CD4-positive, alpha-beta T cell (primary cell): ENCODE measurements at regions of chr2 and their contacts with region 1.

Region 1: DNA sequence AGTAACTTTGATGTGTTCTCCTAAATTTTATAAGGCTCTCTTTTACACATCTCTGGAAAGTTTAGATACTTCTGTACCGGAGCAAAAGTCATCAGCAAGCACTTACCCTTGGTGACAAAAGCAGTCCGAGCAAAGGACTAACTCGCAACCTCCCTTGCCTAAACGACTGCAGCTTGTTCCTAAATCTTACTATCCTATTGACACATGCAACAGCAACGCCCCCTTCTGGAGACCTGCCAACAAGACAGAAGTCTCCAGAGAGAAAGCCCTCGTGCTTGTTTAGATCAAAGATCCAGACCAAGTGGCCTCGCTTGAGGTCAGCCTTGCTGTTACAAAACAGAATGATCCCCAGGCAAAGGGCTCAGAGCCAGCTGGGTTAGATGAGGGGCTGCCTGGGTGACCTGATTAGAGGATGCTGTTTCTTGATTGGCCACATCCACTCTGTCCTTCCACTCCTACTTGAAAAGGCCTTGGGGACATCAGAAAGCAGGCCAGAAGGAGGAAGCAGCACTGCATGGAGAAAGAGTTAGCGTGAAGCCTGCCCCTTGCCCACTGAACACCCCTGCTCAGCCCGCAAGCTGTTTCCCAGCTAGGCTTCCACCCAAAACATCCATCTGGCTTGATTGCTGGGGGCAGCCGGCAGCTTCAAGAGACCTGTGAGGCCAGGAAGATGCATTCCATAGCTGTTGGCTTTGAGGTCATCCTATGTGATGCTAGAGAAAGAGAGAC is 94.3 kb downstream of the HNRNPLL start:
- DNase-seq: peak; percentile 67 to 87 (median 76)
- ATAC-seq: peak; percentile 81
- H3K4me3 ChIP-seq: no peak overlapping the region
- H3K4me3 Mint-ChIP-seq: no peak overlapping the region
- H3K27ac ChIP-seq: no peak overlapping the region
- H3K27ac Mint-ChIP-seq: no peak overlapping the region
- H3K4me1 ChIP-seq: peaks cover 7% of the 10 kb centered on the region
- H3K4me1 Mint-ChIP-seq: peaks cover 6% of the 10 kb centered on the region
- H3K27me3 ChIP-seq: no peaks in the 10 kb centered on the region
- H3K27me3 Mint-ChIP-seq: peaks cover 6% of the 10 kb centered on the region
- CTCF ChIP-seq: peak; percentile 76

Region 2: DNA sequence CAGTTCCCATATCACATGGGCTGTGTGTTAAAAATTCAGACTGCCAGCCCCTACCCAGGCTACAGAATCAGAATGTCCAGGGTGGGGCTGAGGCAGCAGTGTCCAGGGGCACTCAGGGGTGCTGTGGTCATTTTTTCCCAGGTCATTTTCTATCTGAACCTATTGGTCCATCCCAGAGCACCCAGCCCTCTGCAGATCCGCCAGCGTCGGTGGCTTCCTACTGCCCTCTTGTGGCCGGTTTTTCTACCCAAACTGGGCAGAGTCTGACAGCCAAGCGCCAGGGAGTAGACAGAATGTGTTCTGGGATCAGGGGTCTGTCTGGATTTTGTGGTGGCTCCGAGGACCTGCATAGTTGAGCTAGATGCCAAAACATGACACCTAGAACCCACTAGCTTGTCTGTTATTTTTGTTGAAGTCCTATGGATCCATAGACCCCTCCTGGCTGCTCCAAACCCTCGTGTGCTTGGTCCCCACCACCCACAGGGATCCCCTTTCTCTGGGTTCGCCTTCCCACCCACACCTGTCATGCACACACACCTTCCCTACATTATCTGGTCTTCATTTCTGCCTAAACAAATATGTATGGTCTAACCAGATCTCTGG is 617.5 kb before region 1 on chr2:
- CTCF ChIA-PET with region 1: no interaction called
- POLR2A ChIA-PET with region 1: no interaction called
- intact Hi-C with region 1: loop called in 1 of 2 experiments (anchors 10 kb)
- DNase-seq: peak; percentile 39 to 78 (median 57)
- ATAC-seq: peak; percentile 65
- H3K4me3 ChIP-seq: no peak overlapping the region
- H3K4me3 Mint-ChIP-seq: no peak overlapping the region
- H3K27ac ChIP-seq: no peak overlapping the region
- H3K27ac Mint-ChIP-seq: no peak overlapping the region
- H3K4me1 ChIP-seq: peaks cover 40% of the 10 kb centered on the region
- H3K4me1 Mint-ChIP-seq: peaks cover 51% of the 10 kb centered on the region
- H3K27me3 ChIP-seq: peaks cover 0 to 4% of the 10 kb centered on the region in 2 experiments
- H3K27me3 Mint-ChIP-seq: peaks cover 2% of the 10 kb centered on the region
- CTCF ChIP-seq: peak; percentile 79

Region 3: GRCh38 chr2:37982147-37982582 is 526.3 kb before region 1 on chr2:
- CTCF ChIA-PET with region 1: no interaction called
- POLR2A ChIA-PET with region 1: no interaction called
- intact Hi-C with region 1: loop called in 1 of 2 experiments (anchors 1 kb)
- DNase-seq: peak; percentile 7 to 74 (median 46)
- ATAC-seq: no peak
- H3K4me3 ChIP-seq: no peak overlapping the region
- H3K4me3 Mint-ChIP-seq: no peak overlapping the region
- H3K27ac ChIP-seq: no peak overlapping the region
- H3K27ac Mint-ChIP-seq: no peak overlapping the region
- H3K4me1 ChIP-seq: no peaks in the 10 kb centered on the region
- H3K4me1 Mint-ChIP-seq: peaks cover 4% of the 10 kb centered on the region
- H3K27me3 ChIP-seq: peaks cover 0 to 5% of the 10 kb centered on the region in 2 experiments
- H3K27me3 Mint-ChIP-seq: no peaks in the 10 kb centered on the region
- CTCF ChIP-seq: peak; percentile 93